ENCODE measurements at regions of chr9 and their contacts with region 1.

Region 1: GRCh38 chr9:72280913-72281500 is 84.0 kb downstream of the ZFAND5 start:
- H3K4me3 ChIP-seq: no peak overlapping the region
- H3K27ac ChIP-seq: no peak overlapping the region
- H3K4me1 ChIP-seq: no peaks in the 10 kb centered on the region
- CTCF ChIP-seq: peak; percentile 59; the same call in 1 of the 2 replicates

Region 2: DNA sequence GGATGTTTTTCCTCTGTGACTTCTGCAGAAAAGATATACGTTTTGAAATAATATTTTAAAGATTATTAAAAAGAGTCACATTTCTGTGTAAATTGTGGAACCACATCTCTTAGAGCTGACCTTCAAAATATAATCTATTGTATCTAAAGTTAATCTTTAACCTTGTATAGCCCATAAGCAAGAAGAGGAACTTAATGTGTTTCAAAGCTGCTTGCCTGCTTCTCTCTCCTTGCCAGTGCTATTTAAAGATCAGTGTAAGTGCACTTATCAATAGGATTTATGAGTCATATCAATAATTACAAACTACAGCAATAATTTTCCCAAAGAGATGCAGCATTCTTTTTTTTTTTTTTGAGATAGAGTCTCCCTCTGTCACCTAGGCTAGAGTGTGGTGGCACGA is 161.2 kb before region 1 on chr9:
- CTCF ChIA-PET with region 1: no interaction called
- POLR2A ChIA-PET with region 1: no interaction called
- H3K4me3 ChIP-seq: no peak overlapping the region
- H3K27ac ChIP-seq: no peak overlapping the region
- H3K4me1 ChIP-seq: no peaks in the 10 kb centered on the region
- CTCF ChIP-seq: no peak

Region 3: DNA sequence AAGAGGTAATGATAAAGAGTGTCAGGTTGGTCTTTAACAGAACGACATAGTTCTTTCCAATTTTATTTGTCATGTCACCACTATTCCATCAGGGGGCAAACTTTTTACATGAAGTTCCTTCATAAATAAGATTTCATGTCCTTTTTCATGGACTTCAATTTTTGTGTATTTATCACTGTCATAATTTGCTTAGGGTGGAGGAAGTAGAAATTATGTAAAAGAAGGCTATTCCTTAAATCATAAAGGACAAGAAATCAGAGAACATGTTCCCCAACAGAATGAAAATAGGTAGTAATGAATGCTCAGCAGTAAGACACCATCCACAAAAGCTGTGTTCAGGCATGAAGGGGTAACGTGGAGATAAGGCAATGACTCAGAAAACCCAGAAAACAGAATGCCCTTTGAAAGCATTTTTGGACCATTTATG is 11.3 kb after region 1 on chr9:
- CTCF ChIA-PET with region 1: interaction called, 23 read pairs
- POLR2A ChIA-PET with region 1: no interaction called
- H3K4me3 ChIP-seq: no peak overlapping the region
- H3K27ac ChIP-seq: no peak overlapping the region
- H3K4me1 ChIP-seq: peaks cover 2% of the 10 kb centered on the region; the same call in 1 of the 2 replicates
- CTCF ChIP-seq: no peak

Region 4: GRCh38 chr9:72592502-72593403 is 311.7 kb after region 1 on chr9:
- CTCF ChIA-PET with region 1: interaction called, 48 read pairs
- POLR2A ChIA-PET with region 1: no interaction called
- H3K4me3 ChIP-seq: no peak overlapping the region
- H3K27ac ChIP-seq: no peak overlapping the region
- H3K4me1 ChIP-seq: no peaks in the 10 kb centered on the region
- CTCF ChIP-seq: 0 out of 2 replicates have a peak, but pooled peaks have one; percentile 6

Measured in HEK293 (cell line).